Mammary epithelial cell (primary cell): ENCODE measurements at regions of chr17 and their contacts with region 1.

Region 1: DNA sequence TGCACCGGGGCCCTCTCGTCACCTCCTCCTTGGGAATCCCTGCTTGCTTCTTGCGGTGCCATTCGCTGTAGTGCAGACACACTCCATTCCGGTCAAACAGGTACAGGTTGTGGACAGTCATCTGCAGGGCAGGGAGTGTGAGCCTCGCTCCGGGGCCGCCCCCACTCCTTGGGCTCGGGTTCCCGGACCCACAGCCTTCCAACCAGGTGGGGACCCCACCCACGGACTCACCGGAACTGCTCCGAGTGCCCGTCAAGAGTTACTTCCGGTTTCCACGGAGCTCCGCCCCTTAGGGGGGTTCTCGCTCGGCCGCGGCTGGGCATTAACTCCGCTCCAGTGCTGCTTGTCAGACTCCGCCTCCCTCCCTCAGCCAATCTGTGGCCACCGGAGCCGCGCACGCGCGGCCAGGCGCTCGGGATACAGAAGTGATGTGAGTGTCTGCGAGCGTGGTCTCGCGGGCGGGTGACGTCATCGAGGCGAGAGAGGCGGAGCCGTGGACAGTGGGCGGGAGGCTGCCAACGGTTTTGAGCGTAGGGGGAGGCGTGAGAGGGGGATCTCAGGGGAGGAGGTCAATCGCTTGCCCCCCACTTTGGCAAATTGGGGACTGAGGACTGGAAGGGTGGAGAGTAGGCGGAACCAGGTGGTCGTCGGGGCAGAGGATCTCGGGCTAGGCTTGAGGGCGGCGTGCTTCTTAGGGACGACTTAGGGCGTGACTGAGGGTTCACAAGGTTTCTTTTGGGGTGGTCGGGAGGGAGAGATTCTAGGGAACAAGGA is at the starts of genes CNTROB and TRAPPC1:
- DNase-seq: peak; percentile 99
- H3K4me3 ChIP-seq: peak within 1 kb of the TSS; percentile 70 to 94 (median 87)
- H3K27ac ChIP-seq: peak within 1 kb of the TSS; percentile 85
- H3K4me1 ChIP-seq: peaks cover 16% of the 10 kb centered on the region
- H3K27me3 ChIP-seq: no peaks in the 10 kb centered on the region
- CTCF ChIP-seq: no peak
- total RNA-seq, gene CNTROB: 20.3 to 38.4 TPM
- total RNA-seq, gene TRAPPC1: 43.3 to 174 TPM

Region 2: GRCh38 chr17:7687908-7688807 is 243.7 kb before region 1 on chr17 and contains the start of gene WRAP53:
- CTCF ChIA-PET with region 1: no interaction called
- dilution Hi-C with region 1: no loop called
- in situ Hi-C with region 1: no loop called
- intact Hi-C with region 1: no loop called
- DNase-seq: peak; percentile 99
- H3K4me3 ChIP-seq: peak within 1 kb of the TSS; percentile 79 to 100 (median 96)
- H3K27ac ChIP-seq: peak within 1 kb of the TSS; percentile 98
- H3K4me1 ChIP-seq: peaks cover 24% of the 10 kb centered on the region
- H3K27me3 ChIP-seq: no peaks in the 10 kb centered on the region
- CTCF ChIP-seq: peak; percentile 95 to 97
- total RNA-seq, gene WRAP53: 4.3 to 15.9 TPM

Region 3: DNA sequence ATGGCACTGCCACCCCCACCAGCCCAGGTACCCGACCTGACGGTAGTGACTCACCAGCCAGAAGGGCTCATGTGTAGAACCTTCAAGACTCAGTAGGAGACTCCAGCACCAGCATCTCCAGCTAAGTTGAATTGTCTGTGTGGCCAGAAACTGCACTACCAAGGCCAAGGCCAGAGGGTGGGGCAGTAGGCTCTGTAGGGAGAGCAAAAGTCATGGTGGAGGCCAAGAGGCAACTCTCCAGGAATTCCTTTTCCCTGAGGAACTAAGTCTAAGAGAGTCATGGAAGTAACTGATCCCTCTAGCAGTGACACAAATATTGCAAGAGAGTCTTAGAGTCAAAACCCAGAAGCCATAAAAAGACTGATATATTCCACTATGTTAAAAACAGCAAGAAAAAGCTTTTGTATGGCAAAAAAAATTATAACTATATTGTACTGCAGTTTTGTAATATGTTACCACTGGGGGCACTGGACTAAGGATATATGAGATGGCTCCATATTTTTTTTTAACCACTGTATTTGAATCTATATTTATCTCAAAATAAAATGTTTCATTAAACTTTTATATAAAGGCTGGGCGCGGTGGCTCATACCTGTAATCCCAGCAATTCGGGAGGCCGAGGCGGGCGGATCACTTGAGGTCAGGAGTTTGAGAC is 40.4 kb after region 1 on chr17:
- CTCF ChIA-PET with region 1: no interaction called
- dilution Hi-C with region 1: loop called (anchors 5 kb)
- in situ Hi-C with region 1: no loop called
- intact Hi-C with region 1: no loop called
- DNase-seq: no peak
- H3K4me3 ChIP-seq: no peak overlapping the region
- H3K27ac ChIP-seq: no peak overlapping the region
- H3K4me1 ChIP-seq: no peaks in the 10 kb centered on the region
- H3K27me3 ChIP-seq: no peaks in the 10 kb centered on the region
- CTCF ChIP-seq: peak; percentile 7 to 46

Region 4: DNA sequence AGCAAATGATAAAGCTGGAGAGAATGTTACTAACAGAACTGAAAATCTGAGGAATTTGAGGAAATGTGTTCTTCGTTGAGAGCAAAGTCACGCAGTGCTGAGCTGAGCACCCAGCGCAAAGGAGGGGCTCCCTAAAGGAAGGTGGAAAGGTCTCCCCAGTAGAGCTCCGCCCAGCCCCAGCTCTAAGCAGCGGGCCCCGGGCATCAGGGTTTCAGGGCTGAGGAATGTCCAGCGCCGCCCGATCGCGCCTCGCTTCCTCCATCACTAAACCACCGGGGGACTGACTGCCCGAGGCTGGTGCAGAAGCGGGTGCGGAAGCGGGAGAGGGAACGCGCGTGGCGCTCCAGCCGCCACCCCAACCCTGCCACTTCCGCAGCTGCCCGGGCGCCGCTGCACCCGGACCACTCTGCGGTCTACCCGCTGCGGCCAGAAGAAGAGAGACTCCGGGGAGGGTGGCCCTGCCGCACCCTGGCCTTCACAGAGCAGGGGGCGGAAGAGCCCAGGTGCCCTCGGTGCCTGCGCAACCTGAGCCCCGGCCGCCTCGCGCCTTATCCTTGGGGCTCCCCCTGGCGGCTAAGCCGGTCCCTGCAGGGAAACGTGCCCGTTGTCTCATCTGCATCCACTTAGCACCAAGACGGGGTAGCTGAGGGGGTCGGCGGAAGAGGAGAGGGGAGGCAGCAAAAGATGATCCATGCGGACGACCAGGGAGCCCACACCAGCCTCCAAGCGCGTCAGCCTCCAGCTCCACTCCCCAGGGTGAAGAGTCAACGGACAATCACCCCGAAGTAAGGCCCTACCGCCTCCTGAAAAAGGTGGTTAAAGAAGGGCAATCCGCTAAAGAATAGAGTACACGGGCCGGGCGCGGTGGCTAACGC is 58.1 kb after region 1 on chr17:
- CTCF ChIA-PET with region 1: interaction called, 6 read pairs
- dilution Hi-C with region 1: no loop called
- in situ Hi-C with region 1: no loop called
- intact Hi-C with region 1: loop called (anchors 2 kb)
- DNase-seq: peak; percentile 65
- H3K4me3 ChIP-seq: peak overlapping the region; percentile 55 to 76 (median 55)
- H3K27ac ChIP-seq: peak overlapping the region; percentile 26
- H3K4me1 ChIP-seq: peaks cover 21% of the 10 kb centered on the region
- H3K27me3 ChIP-seq: no peaks in the 10 kb centered on the region
- CTCF ChIP-seq: peak; percentile 85 to 96

Region 5: GRCh38 chr17:8237175-8237574 is 305.3 kb after region 1 on chr17:
- CTCF ChIA-PET with region 1: no interaction called
- dilution Hi-C with region 1: loop called (anchors 10 kb)
- in situ Hi-C with region 1: no loop called
- intact Hi-C with region 1: no loop called
- DNase-seq: no peak
- H3K4me3 ChIP-seq: no peak overlapping the region
- H3K27ac ChIP-seq: no peak overlapping the region
- H3K4me1 ChIP-seq: no peaks in the 10 kb centered on the region
- H3K27me3 ChIP-seq: no peaks in the 10 kb centered on the region
- CTCF ChIP-seq: no peak